SK-N-SH (cell line): ENCODE measurements at regions of chr5 and their contacts with region 1.

Region 1: DNA sequence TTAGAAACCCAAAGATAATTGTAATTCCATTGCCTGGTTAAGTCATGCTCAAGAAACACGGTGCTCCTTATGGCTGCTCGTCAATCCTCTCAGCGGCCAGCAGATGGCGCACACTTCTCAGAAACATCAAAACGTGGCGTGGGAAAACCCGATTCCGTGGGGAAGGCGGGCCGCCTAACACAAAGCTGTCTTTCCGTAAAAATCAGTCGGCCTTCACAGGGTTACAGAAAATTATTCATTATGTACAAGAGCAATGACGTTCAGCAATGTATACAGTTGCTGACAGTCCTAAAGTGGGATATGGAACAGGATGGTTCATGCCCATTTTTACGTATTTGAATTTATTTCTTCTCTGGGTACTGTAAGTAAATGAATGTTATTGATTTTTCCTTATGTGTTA is 83.5 kb downstream of the PDE4D start:
- DNase-seq: peak; percentile 59
- H3K4me3 ChIP-seq: peak overlapping the region; percentile 31 to 40; a peak in 3 of 4 replicates
- H3K27ac ChIP-seq: no peak overlapping the region
- H3K4me1 ChIP-seq: peaks cover 0 to 5% of the 10 kb centered on the region in 2 experiments; a peak in 1 of 4 replicates
- H3K27me3 ChIP-seq: no peaks in the 10 kb centered on the region
- CTCF ChIP-seq: peak; percentile 96
- EP300 ChIP-seq: no peak
- RAD21 ChIP-seq: peak; percentile 87

Region 2: GRCh38 chr5:59905188-59905587 is 95.1 kb after region 1 on chr5:
- CTCF ChIA-PET with region 1: interaction called, 14 read pairs
- POLR2A ChIA-PET with region 1: no interaction called
- DNase-seq: no peak
- H3K4me3 ChIP-seq: no peak overlapping the region
- H3K27ac ChIP-seq: no peak overlapping the region
- H3K4me1 ChIP-seq: peaks cover 0 to 2% of the 10 kb centered on the region in 2 experiments; a peak in 1 of 4 replicates
- H3K27me3 ChIP-seq: no peaks in the 10 kb centered on the region
- CTCF ChIP-seq: no peak
- EP300 ChIP-seq: peak; percentile 30 to 66; a peak in 3 of 4 replicates
- RAD21 ChIP-seq: no peak

Region 3: GRCh38 chr5:60207040-60207439 is 397.0 kb after region 1 on chr5:
- CTCF ChIA-PET with region 1: no interaction called
- POLR2A ChIA-PET with region 1: no interaction called
- DNase-seq: no peak
- H3K4me3 ChIP-seq: no peak overlapping the region
- H3K27ac ChIP-seq: no peak overlapping the region
- H3K4me1 ChIP-seq: no peaks in the 10 kb centered on the region; a peak in 2 of 4 replicates
- H3K27me3 ChIP-seq: no peaks in the 10 kb centered on the region
- CTCF ChIP-seq: no peak
- EP300 ChIP-seq: no peak
- RAD21 ChIP-seq: no peak

Region 4: GRCh38 chr5:60295423-60295822 is 485.4 kb after region 1 on chr5:
- CTCF ChIA-PET with region 1: interaction called, 16 read pairs
- POLR2A ChIA-PET with region 1: no interaction called
- DNase-seq: peak; percentile 20
- H3K4me3 ChIP-seq: no peak overlapping the region
- H3K27ac ChIP-seq: no peak overlapping the region
- H3K4me1 ChIP-seq: peaks cover 0 to 7% of the 10 kb centered on the region in 2 experiments; a peak in 1 of 4 replicates
- H3K27me3 ChIP-seq: no peaks in the 10 kb centered on the region
- CTCF ChIP-seq: peak; percentile 68
- EP300 ChIP-seq: no peak
- RAD21 ChIP-seq: peak; percentile 92

Region 5: DNA sequence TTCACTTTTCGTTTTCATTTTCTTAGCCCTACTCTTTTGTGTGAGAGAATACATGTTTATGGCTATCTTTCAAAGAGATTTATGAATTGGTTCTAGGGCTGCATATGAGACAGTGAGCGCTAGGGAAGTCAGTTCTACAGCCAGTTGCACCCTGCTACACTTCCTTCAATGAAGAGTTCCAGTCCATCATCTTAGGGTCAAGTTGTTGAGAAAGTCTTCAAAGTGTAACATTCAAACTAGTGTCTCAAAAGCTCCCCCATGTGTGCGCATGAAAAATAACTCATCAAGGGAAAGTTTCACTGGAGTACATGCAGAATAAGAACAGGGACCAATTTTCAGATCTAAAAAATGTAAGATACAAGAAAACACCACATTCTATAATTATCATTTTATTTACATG is 572.7 kb after region 1 on chr5:
- CTCF ChIA-PET with region 1: interaction called, 46 read pairs
- POLR2A ChIA-PET with region 1: no interaction called
- DNase-seq: peak; percentile 16
- H3K4me3 ChIP-seq: no peak overlapping the region
- H3K27ac ChIP-seq: no peak overlapping the region
- H3K4me1 ChIP-seq: peaks cover 13 to 16% of the 10 kb centered on the region in 2 experiments; a peak in 3 of 4 replicates
- H3K27me3 ChIP-seq: no peaks in the 10 kb centered on the region
- CTCF ChIP-seq: peak; percentile 74
- EP300 ChIP-seq: no peak
- RAD21 ChIP-seq: peak; percentile 88

Region 6: DNA sequence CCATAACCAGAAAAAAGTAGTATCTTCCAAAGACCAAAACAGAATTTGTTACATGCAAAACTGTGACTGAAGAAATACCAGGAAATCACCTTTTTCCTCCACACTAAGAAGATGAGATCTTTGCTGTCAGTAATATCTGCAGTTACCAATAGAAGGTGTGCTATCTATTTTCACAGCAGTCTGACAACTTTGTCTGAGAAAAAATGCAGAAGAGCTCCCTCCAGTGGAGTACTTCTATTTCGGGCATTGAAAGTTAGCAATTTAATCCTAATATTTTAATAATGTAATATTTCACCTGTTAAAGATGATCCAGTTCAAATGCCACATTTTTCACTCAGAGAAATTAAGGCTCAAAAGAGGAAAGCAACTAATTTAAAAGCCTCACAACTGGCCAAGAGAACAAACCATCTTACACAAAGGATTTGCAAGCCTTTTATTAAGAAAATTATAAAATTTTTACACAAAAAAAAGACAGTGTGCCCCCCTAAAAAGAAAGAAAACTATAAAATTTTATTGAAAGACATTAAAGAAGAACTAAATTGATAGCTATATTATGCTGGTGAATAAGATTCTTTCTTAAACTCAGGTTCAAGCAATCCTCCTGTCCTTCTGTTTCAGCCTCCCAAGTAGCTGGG is 839.4 kb after region 1 on chr5:
- CTCF ChIA-PET with region 1: interaction called, 27 read pairs
- POLR2A ChIA-PET with region 1: no interaction called
- DNase-seq: peak; percentile 23
- H3K4me3 ChIP-seq: no peak overlapping the region; a peak in 1 of 4 replicates
- H3K27ac ChIP-seq: no peak overlapping the region
- H3K4me1 ChIP-seq: no peaks in the 10 kb centered on the region
- H3K27me3 ChIP-seq: no peaks in the 10 kb centered on the region
- CTCF ChIP-seq: peak; percentile 82
- EP300 ChIP-seq: no peak
- RAD21 ChIP-seq: peak; percentile 71